Activated B cell treated with CpG ODN at 0.5 μM for 24 hours (primary cell): ENCODE measurements at regions of chr3 and their contacts with region 1.

Region 1: GRCh38 chr3:159884661-159885402 is 103.8 kb upstream of the IL12A start:
- DNase-seq: no peak
- ATAC-seq: peak; percentile 57
- H3K4me3 Mint-ChIP-seq: no peak overlapping the region
- H3K27ac Mint-ChIP-seq: no peak overlapping the region
- H3K4me1 Mint-ChIP-seq: no peaks in the 10 kb centered on the region
- H3K27me3 Mint-ChIP-seq: no peaks in the 10 kb centered on the region
- CTCF ChIP-seq: no peak

Region 2: DNA sequence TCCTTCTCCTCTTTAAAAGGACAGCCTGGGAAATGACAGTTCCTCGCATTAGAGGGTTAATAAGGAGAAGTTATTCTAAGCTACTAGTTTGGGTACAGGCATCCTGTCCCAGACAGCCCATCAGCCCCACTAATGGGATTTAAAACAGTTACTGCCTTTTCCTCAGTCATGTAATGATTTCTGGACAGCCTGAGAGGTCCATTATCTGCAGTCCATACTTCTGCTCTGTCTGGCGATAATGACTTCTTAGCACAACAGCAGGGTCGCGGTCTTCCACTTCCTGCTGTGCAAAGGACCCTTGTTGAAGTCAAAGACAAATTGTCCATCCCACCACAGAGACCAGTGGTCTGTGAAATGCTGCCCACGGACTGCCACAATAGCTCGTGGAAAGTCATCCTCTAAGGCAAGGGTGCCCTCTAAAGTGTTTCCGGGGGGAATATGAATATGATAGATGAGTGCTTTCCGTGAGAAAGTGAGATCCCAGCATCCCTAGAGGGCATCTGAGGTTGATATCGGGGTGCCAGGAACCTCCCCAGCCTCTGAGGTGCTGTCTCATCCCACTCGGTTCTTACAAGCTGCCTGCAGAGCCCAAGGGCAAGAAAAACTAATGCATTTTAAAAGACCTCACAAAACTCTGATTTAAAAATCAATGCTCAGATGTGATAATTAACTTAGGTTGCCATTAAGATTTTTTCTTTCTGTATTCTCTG is 1879.3 kb before region 1 on chr3:
- CTCF ChIA-PET with region 1: no interaction called
- POLR2A ChIA-PET with region 1: no interaction called
- intact Hi-C with region 1: no loop called
- DNase-seq: no peak
- ATAC-seq: no peak
- H3K4me3 Mint-ChIP-seq: no peak overlapping the region
- H3K27ac Mint-ChIP-seq: no peak overlapping the region
- H3K4me1 Mint-ChIP-seq: no peaks in the 10 kb centered on the region
- H3K27me3 Mint-ChIP-seq: no peaks in the 10 kb centered on the region
- CTCF ChIP-seq: no peak

Region 3: DNA sequence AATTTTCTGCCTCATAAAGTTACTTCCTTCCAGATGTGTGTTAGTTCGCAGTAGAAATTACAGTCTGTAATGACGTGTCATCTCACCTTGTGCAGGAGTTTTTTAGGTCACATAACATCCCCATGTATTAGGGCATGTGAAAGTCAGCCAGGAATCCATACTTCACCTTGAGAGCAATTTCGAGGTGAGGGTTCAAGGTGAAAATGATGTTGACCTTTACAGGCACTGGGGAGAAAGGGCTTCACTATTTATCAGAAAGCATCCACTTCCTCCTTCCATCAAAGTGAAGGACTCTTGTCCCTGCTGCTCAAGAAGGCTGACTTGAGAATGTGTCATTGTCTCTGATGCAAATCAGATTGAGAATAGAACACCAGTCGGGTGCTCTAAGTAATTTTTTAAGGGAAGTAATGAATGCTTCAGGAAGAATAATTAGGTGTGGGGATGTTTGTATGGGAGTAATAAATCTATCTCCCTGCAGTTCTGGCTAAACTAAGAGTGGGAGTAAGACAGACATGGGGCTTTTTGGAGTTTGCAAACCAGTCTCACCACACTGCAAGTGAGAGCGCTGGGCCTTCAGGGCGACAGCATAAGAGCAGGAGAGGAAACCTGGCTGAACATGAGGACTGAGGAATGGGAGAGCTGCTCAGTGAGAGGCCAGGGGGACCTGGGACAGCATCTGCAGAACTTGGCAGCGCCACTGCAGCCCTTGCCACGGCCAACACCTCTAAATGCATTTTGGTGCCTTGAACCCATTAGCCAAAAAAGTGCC is 17.9 kb after region 1 on chr3:
- CTCF ChIA-PET with region 1: interaction called, 19 read pairs
- POLR2A ChIA-PET with region 1: interaction called, 4 read pairs
- intact Hi-C with region 1: no loop called
- DNase-seq: no peak
- ATAC-seq: peak; percentile 59
- H3K4me3 Mint-ChIP-seq: no peak overlapping the region
- H3K27ac Mint-ChIP-seq: peak overlapping the region; percentile 63
- H3K4me1 Mint-ChIP-seq: peaks cover 25% of the 10 kb centered on the region
- H3K27me3 Mint-ChIP-seq: no peaks in the 10 kb centered on the region
- CTCF ChIP-seq: no peak

Region 4: DNA sequence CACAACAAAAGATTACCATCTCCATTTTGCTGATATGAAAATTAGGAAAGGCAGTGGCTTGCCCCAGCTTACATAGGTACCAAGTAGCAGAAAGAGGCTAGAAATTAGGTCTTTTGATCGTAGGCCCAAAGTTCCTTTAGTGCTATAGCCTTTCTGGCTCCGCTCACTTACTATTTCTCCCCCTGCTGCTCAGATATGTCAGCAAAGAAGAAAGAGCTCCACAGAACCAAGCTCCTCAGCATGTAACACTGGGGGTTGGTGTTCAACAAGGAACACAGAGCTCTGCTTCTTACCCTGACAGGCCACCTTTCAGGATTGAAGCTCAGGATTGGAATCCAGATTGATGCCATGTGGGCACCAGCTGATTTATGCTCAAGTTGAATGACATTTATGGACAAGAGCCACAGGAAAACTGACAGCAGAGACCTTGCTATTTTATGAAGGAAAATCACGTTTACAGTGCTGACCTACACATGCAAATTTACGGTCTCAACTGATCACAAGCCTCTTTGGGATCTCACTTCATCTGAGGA is 97.7 kb after region 1 on chr3:
- CTCF ChIA-PET with region 1: interaction called, 83 read pairs
- POLR2A ChIA-PET with region 1: interaction called, 13 read pairs
- intact Hi-C with region 1: no loop called
- DNase-seq: no peak
- ATAC-seq: no peak
- H3K4me3 Mint-ChIP-seq: no peak overlapping the region
- H3K27ac Mint-ChIP-seq: no peak overlapping the region
- H3K4me1 Mint-ChIP-seq: peaks cover 5% of the 10 kb centered on the region
- H3K27me3 Mint-ChIP-seq: no peaks in the 10 kb centered on the region
- CTCF ChIP-seq: no peak

Region 5: DNA sequence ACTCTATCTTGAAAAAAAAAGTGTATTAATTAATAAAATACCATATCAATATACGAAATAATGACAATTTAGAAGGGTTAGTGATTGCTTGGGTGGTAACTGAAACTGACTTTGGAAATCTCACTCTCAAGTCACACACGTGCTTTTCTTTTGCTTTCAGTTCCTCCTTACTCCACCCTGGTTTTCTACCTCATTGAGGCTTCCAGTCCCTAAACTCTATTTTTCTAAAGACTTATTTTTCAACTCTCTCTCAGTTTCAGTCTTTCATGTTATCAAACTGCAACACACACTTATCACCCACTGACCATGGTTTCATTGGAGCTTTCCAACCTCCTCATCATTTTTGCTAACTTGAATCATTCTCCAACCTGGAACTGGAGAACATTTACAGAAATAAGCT is 127.3 kb after region 1 on chr3:
- CTCF ChIA-PET with region 1: interaction called, 290 read pairs
- POLR2A ChIA-PET with region 1: interaction called, 3 read pairs
- intact Hi-C with region 1: no loop called
- DNase-seq: no peak
- ATAC-seq: peak; percentile 88
- H3K4me3 Mint-ChIP-seq: peak overlapping the region; percentile 25
- H3K27ac Mint-ChIP-seq: peak overlapping the region; percentile 83
- H3K4me1 Mint-ChIP-seq: peaks cover 42% of the 10 kb centered on the region
- H3K27me3 Mint-ChIP-seq: no peaks in the 10 kb centered on the region
- CTCF ChIP-seq: no peak

Region 6: DNA sequence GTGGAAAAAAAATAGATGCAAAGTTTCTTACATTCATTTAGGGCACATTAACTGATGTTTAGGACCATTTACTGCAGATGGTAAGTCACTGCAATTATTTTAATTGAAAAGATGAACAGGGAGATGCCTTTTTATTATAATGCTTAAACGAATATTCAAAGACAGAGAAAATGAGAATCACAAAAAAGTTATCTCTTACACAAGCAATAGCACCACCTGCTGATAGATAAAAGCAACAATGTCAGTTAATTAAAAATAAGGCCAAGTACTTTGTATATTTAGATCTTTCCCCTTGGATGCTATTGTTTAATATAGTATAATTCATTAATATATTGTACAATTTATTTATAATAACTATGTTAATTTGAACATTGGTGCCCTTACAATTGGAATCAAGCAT is 458.3 kb after region 1 on chr3:
- CTCF ChIA-PET with region 1: interaction called, 11 read pairs
- POLR2A ChIA-PET with region 1: no interaction called
- intact Hi-C with region 1: loop called (anchors 1 kb)
- DNase-seq: no peak
- ATAC-seq: no peak
- H3K4me3 Mint-ChIP-seq: no peak overlapping the region
- H3K27ac Mint-ChIP-seq: no peak overlapping the region
- H3K4me1 Mint-ChIP-seq: no peaks in the 10 kb centered on the region
- H3K27me3 Mint-ChIP-seq: no peaks in the 10 kb centered on the region
- CTCF ChIP-seq: no peak

Region 7: GRCh38 chr3:160486459-160486869 is 601.6 kb after region 1 on chr3:
- CTCF ChIA-PET with region 1: interaction called, 3 read pairs
- POLR2A ChIA-PET with region 1: no interaction called
- intact Hi-C with region 1: loop called (anchors 1 kb)
- DNase-seq: no peak
- ATAC-seq: peak; percentile 25
- H3K4me3 Mint-ChIP-seq: peak overlapping the region; percentile 76
- H3K27ac Mint-ChIP-seq: no peak overlapping the region
- H3K4me1 Mint-ChIP-seq: peaks cover 7% of the 10 kb centered on the region
- H3K27me3 Mint-ChIP-seq: no peaks in the 10 kb centered on the region
- CTCF ChIP-seq: peak; percentile 62